OCI-LY7 (cell line): ENCODE measurements at regions of chr2 and their contacts with region 1.

Region 1: GRCh38 chr2:200963124-200963917 is at the start of gene ORC2:
- DNase-seq: peak; percentile 95
- H3K4me3 ChIP-seq: peak within 1 kb of the TSS; percentile 76
- H3K27ac ChIP-seq: peak within 1 kb of the TSS; percentile 71
- H3K4me1 ChIP-seq: peaks cover 28% of the 10 kb centered on the region
- CTCF ChIP-seq: peak; percentile 83
- total RNA-seq, gene ORC2: 14.9 and 28.6 TPM in 2 replicates

Region 2: GRCh38 chr2:200944467-200945394 is 18.6 kb before region 1 on chr2:
- CTCF ChIA-PET with region 1: no interaction called
- POLR2A ChIA-PET with region 1: no interaction called
- intact Hi-C with region 1: no loop called
- DNase-seq: no peak
- H3K4me3 ChIP-seq: no peak overlapping the region
- H3K27ac ChIP-seq: no peak overlapping the region
- H3K4me1 ChIP-seq: no peaks in the 10 kb centered on the region
- CTCF ChIP-seq: no peak

Region 3: DNA sequence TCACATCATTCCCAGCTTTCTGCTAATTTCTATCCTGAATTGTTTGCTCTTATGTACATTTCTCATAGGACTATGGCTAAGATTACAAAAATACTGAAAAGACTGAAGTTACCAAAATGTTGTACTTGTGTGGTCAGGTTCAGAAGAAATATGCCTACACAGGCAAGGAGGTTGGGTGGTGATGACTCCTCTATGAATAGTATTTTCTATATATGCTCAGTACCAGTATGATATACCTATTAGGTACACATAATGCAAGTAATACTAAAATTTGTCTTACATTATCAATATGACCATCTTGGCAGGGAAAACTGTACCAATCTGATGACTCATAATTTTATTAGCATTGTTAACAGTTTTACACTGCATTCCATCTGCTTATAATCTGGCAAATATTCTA is 12.4 kb after region 1 on chr2:
- CTCF ChIA-PET with region 1: interaction called, 3 read pairs
- POLR2A ChIA-PET with region 1: interaction called, 28 read pairs
- intact Hi-C with region 1: no loop called
- DNase-seq: no peak
- H3K4me3 ChIP-seq: no peak overlapping the region
- H3K27ac ChIP-seq: no peak overlapping the region
- H3K4me1 ChIP-seq: no peaks in the 10 kb centered on the region
- CTCF ChIP-seq: no peak

Region 4: GRCh38 chr2:201049455-201049854 is 86.1 kb after region 1 on chr2:
- CTCF ChIA-PET with region 1: no interaction called
- POLR2A ChIA-PET with region 1: no interaction called
- intact Hi-C with region 1: no loop called
- DNase-seq: no peak
- H3K4me3 ChIP-seq: no peak overlapping the region
- H3K27ac ChIP-seq: no peak overlapping the region
- H3K4me1 ChIP-seq: no peaks in the 10 kb centered on the region
- CTCF ChIP-seq: no peak

Region 5: GRCh38 chr2:201071479-201072200 is 108.3 kb after region 1 on chr2 and contains the starts of genes HYCC2 and NDUFB3:
- CTCF ChIA-PET with region 1: interaction called, 12 read pairs
- POLR2A ChIA-PET with region 1: interaction called, 3 read pairs
- intact Hi-C with region 1: loop called (anchors 1 kb)
- DNase-seq: peak; percentile 96
- H3K4me3 ChIP-seq: peak within 1 kb of the TSS; percentile 74
- H3K27ac ChIP-seq: peak within 1 kb of the TSS; percentile 58
- H3K4me1 ChIP-seq: peaks cover 39% of the 10 kb centered on the region
- CTCF ChIP-seq: peak; percentile 53; the same call in 1 of the 2 replicates
- total RNA-seq, gene HYCC2: 8.6 and 8.8 TPM in 2 replicates
- total RNA-seq, gene NDUFB3: 90.5 and 134 TPM in 2 replicates

Region 6: GRCh38 chr2:201118121-201118960 is 155.0 kb after region 1 on chr2:
- CTCF ChIA-PET with region 1: no interaction called
- POLR2A ChIA-PET with region 1: interaction called, 3 read pairs
- intact Hi-C with region 1: loop called (anchors 2 kb)
- DNase-seq: peak; percentile 91
- H3K4me3 ChIP-seq: peak overlapping the region; percentile 81
- H3K27ac ChIP-seq: peak overlapping the region; percentile 95
- H3K4me1 ChIP-seq: peaks cover 43% of the 10 kb centered on the region
- CTCF ChIP-seq: peak; percentile 85

Region 7: GRCh38 chr2:201158111-201158929 is 195.0 kb after region 1 on chr2:
- CTCF ChIA-PET with region 1: no interaction called
- POLR2A ChIA-PET with region 1: interaction called, 3 read pairs
- intact Hi-C with region 1: loop called (anchors 2 kb)
- DNase-seq: peak; percentile 83
- H3K4me3 ChIP-seq: peak overlapping the region; percentile 24
- H3K27ac ChIP-seq: peak overlapping the region; percentile 55
- H3K4me1 ChIP-seq: peaks cover 20% of the 10 kb centered on the region
- CTCF ChIP-seq: peak; percentile 87

Region 8: GRCh38 chr2:201176081-201176481 is 212.8 kb after region 1 on chr2:
- CTCF ChIA-PET with region 1: no interaction called
- POLR2A ChIA-PET with region 1: no interaction called
- intact Hi-C with region 1: loop called (anchors 2 kb)
- DNase-seq: no peak
- H3K4me3 ChIP-seq: no peak overlapping the region
- H3K27ac ChIP-seq: no peak overlapping the region
- H3K4me1 ChIP-seq: peaks cover 6% of the 10 kb centered on the region
- CTCF ChIP-seq: no peak

Region 9: DNA sequence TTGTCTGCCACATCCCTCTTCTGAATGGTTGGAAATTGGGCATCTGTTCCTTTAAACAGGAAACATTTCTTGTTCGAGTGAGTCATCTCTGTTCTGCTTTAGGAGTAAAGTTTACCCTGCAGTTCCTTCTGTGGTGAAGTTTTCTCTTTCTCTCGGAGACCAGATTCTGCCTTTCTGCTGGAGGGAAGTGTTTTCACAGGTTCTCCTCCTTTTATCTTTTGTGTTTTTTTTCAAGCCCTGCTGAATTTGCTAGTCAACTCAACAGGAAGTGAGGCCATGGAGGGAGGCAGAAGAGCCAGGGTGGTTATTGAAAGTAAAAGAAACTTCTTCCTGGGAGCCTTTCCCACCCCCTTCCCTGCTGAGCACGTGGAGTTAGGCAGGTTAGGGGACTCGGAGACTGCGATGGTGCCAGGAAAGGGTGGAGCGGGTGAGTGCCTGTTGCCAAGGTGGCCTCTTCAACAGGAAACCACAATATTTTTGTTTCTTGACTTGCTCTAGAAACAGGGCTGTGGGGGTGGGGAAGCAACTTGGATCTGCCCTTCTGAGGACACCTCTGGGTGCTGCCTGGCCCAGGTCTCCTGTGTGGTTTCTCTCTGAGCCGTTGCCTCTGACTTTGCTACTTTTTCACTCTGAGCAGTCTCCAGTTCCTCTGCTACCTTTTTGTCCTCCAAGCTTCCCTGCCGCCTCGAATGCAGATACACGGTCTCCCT is 294.8 kb after region 1 on chr2:
- CTCF ChIA-PET with region 1: no interaction called
- POLR2A ChIA-PET with region 1: no interaction called
- intact Hi-C with region 1: loop called (anchors 1 kb)
- DNase-seq: peak; percentile 84
- H3K4me3 ChIP-seq: peak overlapping the region; percentile 69
- H3K27ac ChIP-seq: peak overlapping the region; percentile 93
- H3K4me1 ChIP-seq: peaks cover 47% of the 10 kb centered on the region
- CTCF ChIP-seq: peak; percentile 18; the same call in 1 of the 2 replicates